ENCODE measurements at regions of chr16 and their contacts with region 1.

Region 1: GRCh38 chr16:81838794-81839193 is 59.7 kb downstream of the PLCG2 start:
- DNase-seq: no peak
- ATAC-seq: peak; percentile 38
- H3K4me3 Mint-ChIP-seq: peak overlapping the region; percentile 73
- H3K27ac Mint-ChIP-seq: peak overlapping the region; percentile 93
- H3K4me1 Mint-ChIP-seq: peaks cover 96% of the 10 kb centered on the region
- H3K27me3 Mint-ChIP-seq: no peaks in the 10 kb centered on the region
- CTCF ChIP-seq: no peak

Region 2: DNA sequence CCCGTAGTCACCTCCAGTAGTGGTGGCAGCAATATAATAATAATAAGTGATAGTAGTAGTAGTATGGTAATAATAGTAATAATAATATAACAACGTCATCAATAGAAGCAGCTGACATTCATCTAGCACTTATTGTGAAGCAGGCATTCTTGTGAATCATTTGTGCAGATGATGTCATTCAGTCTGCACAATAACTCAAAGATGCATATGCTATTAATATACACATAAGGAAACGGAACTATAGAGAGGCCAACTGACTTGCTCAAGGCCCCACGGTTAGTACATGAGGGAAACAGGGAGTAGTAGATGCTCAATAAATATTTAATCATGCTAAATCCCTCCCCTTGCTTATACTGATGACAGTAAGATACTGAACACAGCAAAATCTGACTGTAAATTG is 559.4 kb before region 1 on chr16:
- CTCF ChIA-PET with region 1: no interaction called
- POLR2A ChIA-PET with region 1: no interaction called
- intact Hi-C with region 1: no loop called
- DNase-seq: no peak
- ATAC-seq: no peak
- H3K4me3 Mint-ChIP-seq: no peak overlapping the region
- H3K27ac Mint-ChIP-seq: no peak overlapping the region
- H3K4me1 Mint-ChIP-seq: no peaks in the 10 kb centered on the region
- H3K27me3 Mint-ChIP-seq: peaks cover 2% of the 10 kb centered on the region
- CTCF ChIP-seq: no peak

Region 3: DNA sequence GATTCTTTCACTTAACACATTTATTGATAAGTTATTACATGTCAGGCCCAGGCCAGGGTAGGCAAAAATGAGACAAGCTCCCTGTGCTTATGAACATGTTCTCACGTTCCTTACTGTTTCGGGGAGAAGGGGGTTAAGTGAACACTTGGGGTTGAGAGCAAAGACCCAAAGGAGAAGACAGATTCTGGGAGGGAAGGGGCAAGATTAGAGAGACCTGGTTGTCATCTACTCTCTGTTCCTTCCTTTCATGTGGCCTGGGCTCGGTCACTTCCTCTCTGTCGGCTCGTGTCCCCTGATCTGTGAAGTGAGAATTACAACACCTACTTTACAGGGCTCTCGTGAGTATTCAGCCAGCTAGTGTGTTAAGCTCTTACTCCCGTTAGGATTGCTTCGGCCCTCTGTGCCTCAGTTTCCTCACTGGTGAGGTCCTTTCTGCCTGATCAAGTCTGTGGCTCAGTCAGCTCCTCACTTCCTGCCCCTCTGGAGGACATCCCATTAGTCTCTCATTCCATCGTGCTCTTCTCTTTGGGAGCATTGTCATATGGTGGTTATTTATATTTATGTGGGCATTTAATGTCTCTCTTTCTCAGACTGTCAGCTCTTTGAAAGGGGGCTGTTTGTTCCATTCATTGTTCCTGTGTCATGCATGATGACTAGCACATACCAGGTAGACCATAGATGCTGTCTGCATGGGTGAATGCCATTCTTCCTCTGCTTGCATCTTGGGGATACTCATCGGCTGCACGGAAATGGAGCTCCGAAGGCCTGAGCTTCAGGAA is 20.8 kb before region 1 on chr16:
- CTCF ChIA-PET with region 1: interaction called, 5 read pairs
- POLR2A ChIA-PET with region 1: interaction called, 48 read pairs
- intact Hi-C with region 1: loop called (anchors 2 kb)
- DNase-seq: no peak
- ATAC-seq: peak; percentile 65
- H3K4me3 Mint-ChIP-seq: peak overlapping the region; percentile 66
- H3K27ac Mint-ChIP-seq: peak overlapping the region; percentile 96
- H3K4me1 Mint-ChIP-seq: peaks cover 98% of the 10 kb centered on the region
- H3K27me3 Mint-ChIP-seq: no peaks in the 10 kb centered on the region
- CTCF ChIP-seq: no peak

Region 4: GRCh38 chr16:81823111-81823510 is 15.7 kb before region 1 on chr16:
- CTCF ChIA-PET with region 1: interaction called, 5 read pairs
- POLR2A ChIA-PET with region 1: interaction called, 48 read pairs
- intact Hi-C with region 1: loop called (anchors 1 kb)
- DNase-seq: peak; percentile 67
- ATAC-seq: peak; percentile 65
- H3K4me3 Mint-ChIP-seq: peak overlapping the region; percentile 80
- H3K27ac Mint-ChIP-seq: peak overlapping the region; percentile 97
- H3K4me1 Mint-ChIP-seq: peaks cover 99% of the 10 kb centered on the region
- H3K27me3 Mint-ChIP-seq: no peaks in the 10 kb centered on the region
- CTCF ChIP-seq: no peak

Region 5: DNA sequence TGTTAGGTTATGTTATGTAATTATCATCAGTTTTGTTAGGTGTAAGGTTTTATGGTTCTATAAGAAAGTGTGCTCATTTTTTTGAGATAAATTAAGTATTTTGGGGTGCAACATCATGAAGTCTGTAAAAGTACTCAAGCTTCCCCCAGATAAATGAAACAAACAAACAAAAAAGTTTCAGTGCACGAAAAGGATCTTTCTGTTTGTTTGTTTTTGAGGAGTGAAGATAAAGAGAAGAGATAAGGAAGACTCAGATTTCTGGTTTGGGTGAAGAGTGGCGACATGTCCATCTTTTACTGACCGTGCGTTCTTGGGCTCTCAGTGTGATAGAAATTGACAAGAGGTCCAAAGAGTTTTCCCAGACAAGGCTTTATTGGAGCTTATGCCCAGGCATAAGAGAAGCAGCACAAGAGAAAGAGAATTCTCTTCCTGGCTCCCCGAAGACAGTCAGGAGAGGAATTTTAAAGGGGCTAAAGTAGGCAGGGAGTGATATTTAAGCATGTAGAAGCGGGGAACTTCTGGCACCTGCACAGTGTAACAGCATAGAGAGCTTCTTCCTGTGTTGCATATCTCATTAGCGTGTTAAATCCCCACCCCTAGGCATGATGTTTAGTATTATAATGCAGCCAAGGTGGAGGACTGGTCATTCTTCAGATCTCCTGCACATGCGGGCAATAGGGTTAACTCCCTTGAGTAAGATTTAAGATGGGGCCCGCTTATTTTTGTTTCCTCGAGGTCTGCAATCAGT is 11.6 kb after region 1 on chr16:
- CTCF ChIA-PET with region 1: interaction called, 4 read pairs
- POLR2A ChIA-PET with region 1: interaction called, 5 read pairs
- intact Hi-C with region 1: loop called (anchors 1 kb)
- DNase-seq: no peak
- ATAC-seq: no peak
- H3K4me3 Mint-ChIP-seq: peak overlapping the region; percentile 24
- H3K27ac Mint-ChIP-seq: peak overlapping the region; percentile 62
- H3K4me1 Mint-ChIP-seq: peaks cover 88% of the 10 kb centered on the region
- H3K27me3 Mint-ChIP-seq: no peaks in the 10 kb centered on the region
- CTCF ChIP-seq: no peak

Region 6: DNA sequence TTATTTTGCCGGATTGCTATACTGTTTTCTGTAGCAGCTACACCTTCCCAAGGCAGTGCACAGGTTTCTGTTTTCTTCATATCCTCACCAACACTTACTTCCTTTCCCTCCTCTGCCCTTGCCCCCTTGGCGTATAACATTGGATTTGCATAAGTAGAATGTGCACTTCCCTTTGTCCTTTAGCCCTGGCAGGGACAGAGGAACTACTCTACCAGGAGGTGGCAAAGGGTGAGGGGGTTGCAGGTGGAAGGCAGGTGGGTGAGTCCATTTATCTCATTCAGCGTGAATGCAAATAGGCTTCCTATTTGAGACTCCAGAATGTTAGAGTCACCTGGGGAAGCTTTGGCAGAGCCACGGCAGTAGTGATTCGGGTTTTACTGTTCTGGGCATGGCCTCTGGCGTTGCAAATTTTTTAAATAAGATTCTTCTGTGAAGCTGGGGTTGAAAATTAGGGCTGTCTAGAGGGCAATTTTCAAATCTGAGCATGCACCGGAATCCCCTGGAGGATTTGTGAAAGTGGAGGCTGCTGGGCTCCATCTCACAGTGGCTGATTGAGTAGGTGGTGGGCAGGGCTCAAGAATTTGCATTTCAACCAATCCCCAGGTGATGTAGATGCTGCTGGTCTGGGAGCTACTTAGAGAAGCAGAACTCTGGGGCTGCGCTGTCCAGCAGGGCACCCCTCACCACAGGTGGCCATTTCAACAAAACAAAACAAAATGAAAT is 25.0 kb after region 1 on chr16:
- CTCF ChIA-PET with region 1: interaction called, 3 read pairs
- POLR2A ChIA-PET with region 1: interaction called, 12 read pairs
- intact Hi-C with region 1: loop called (anchors 2 kb)
- DNase-seq: no peak
- ATAC-seq: peak; percentile 73
- H3K4me3 Mint-ChIP-seq: peak overlapping the region; percentile 71
- H3K27ac Mint-ChIP-seq: peak overlapping the region; percentile 88
- H3K4me1 Mint-ChIP-seq: peaks cover 74% of the 10 kb centered on the region
- H3K27me3 Mint-ChIP-seq: no peaks in the 10 kb centered on the region
- CTCF ChIP-seq: no peak

Measured in activated B cell treated with CpG ODN at 0.5 μM for 24 hours (primary cell).